Colonic mucosa (tissue), 4 donors: ENCODE measurements at regions of chr10 and their contacts with region 1.

Region 1: DNA sequence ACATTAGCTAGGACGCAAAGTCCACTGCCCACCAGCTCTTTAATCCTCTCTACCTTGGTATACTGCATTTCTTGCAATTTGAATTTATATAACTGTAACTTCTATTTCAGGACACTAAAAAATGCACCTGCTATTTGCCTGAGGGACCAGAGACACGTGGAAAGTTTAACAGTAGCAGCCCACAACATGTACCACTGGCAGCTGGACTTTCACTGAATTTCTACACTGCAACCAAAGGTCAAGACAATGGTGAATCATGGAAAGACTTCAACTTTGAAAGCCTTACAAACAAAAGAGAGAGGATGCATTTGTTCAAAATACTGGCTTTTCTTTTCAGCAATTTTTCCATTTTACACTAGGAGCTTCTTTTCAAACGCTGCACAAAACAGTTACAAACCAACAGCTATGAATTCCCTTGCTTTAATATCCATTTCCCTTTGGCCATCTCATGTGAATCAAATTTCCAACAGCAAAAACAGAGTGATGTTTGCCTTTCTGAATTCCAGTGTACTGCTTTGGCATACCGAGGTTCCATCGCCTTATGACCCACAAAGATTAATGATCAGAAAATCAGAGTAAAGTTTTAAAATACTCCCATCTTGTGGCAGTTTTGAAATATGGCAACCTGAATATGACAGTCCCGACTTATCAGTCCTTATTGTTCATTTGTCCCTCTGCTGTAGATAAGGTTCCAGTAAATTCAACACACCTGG is 29.9 kb upstream of the HNRNPH3 start:
- DNase-seq: no peak
- H3K4me3 ChIP-seq: no peak overlapping the region
- H3K27ac ChIP-seq: no peak overlapping the region
- H3K4me1 ChIP-seq: peaks cover 8% of the 10 kb centered on the region
- H3K27me3 ChIP-seq: no peaks in the 10 kb centered on the region
- CTCF ChIP-seq: peak; percentile 59

Region 2: DNA sequence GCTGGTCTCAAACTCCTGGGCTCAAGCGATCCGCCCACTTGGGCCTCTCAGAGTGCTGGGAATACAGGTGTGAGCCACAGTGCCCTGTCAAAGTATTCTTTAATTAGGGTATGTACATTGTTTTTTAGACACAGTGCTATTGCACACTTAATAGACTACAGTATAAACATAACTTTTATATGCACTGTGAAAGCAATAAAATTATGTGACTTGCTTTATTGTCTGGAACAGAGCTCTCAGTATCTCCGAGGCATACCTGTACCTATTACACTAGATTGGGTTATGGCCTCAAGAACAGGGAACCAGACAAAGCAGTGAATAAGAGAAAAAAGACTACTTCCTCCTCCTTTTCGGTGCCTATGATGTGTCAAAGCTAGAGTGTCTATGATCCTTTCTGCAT is 83.2 kb before region 1 on chr10:
- intact Hi-C with region 1: loop called (anchors 5 kb)
- DNase-seq: no peak
- H3K4me3 ChIP-seq: no peak overlapping the region
- H3K27ac ChIP-seq: no peak overlapping the region
- H3K4me1 ChIP-seq: no peaks in the 10 kb centered on the region
- H3K27me3 ChIP-seq: no peaks in the 10 kb centered on the region
- CTCF ChIP-seq: no peak

Region 3: DNA sequence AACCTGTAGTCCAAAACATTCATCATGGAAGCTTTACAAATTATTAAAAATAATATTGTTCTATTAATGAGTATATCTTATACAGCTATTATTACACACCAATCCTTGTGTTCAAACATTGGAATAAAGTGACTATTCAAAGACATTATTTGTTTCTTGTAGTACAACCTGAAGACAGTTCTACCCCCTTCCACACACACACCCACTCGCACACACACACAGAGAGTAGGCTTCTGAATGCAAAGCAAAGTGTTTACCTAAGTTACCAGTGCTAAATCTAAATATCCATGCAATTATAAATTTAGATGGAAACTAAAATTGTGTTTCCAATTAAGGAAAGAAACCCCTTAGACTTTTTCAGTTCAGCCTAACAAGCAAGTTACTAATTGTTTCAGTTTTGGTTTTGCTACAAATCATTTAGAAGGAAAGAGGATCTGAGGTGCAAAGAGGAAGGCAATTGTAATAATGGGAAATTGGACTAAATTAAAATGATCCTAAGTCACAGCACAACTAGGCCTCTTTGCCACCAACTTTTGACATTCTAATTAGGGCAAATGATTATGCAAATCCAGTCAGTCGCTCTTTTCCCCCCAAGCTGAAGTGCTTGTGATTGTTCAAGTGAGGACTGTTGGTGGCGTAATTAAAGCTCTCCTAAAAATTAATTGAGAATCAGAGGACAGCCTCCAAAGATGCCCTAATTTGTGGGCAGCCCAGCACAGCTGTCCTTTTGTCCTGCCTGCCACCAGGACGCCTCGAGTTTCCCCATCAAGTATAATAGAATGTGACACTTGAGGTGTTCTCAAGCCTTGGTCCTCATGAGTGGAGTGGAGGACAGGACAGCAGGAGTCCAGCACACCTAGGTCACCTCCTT is 50.1 kb before region 1 on chr10:
- intact Hi-C with region 1: no loop called
- DNase-seq: no peak
- H3K4me3 ChIP-seq: no peak overlapping the region
- H3K27ac ChIP-seq: no peak overlapping the region
- H3K4me1 ChIP-seq: no peaks in the 10 kb centered on the region
- H3K27me3 ChIP-seq: no peaks in the 10 kb centered on the region
- CTCF ChIP-seq: no peak

Region 4: GRCh38 chr10:68633816-68634466 is 332.0 kb after region 1 on chr10:
- intact Hi-C with region 1: no loop called
- DNase-seq: no peak
- H3K4me3 ChIP-seq: no peak overlapping the region
- H3K27ac ChIP-seq: no peak overlapping the region
- H3K4me1 ChIP-seq: no peaks in the 10 kb centered on the region
- H3K27me3 ChIP-seq: no peaks in the 10 kb centered on the region
- CTCF ChIP-seq: no peak

Region 5: GRCh38 chr10:68792115-68792514 is 490.2 kb after region 1 on chr10:
- intact Hi-C with region 1: no loop called
- DNase-seq: no peak
- H3K4me3 ChIP-seq: no peak overlapping the region
- H3K27ac ChIP-seq: no peak overlapping the region
- H3K4me1 ChIP-seq: no peaks in the 10 kb centered on the region
- H3K27me3 ChIP-seq: no peaks in the 10 kb centered on the region
- CTCF ChIP-seq: no peak